Calu3 (cell line): ENCODE measurements at regions of chr11 and their contacts with region 1.

Region 1: GRCh38 chr11:123246749-123247495 is 51.9 kb upstream of the CLMP start:
- DNase-seq: peak; percentile 81
- H3K4me3 Mint-ChIP-seq: no peak overlapping the region
- H3K27ac Mint-ChIP-seq: no peak overlapping the region
- H3K4me1 Mint-ChIP-seq: no peaks in the 10 kb centered on the region
- H3K27me3 Mint-ChIP-seq: peaks cover 46% of the 10 kb centered on the region
- CTCF ChIP-seq: peak; percentile 86

Region 2: GRCh38 chr11:122933416-122933815 is 313.5 kb before region 1 on chr11:
- CTCF ChIA-PET with region 1: no interaction called
- intact Hi-C with region 1: no loop called
- DNase-seq: no peak
- H3K4me3 Mint-ChIP-seq: no peak overlapping the region
- H3K27ac Mint-ChIP-seq: no peak overlapping the region
- H3K4me1 Mint-ChIP-seq: no peaks in the 10 kb centered on the region
- H3K27me3 Mint-ChIP-seq: no peaks in the 10 kb centered on the region
- CTCF ChIP-seq: no peak

Region 3: GRCh38 chr11:123103326-123103980 is 143.5 kb before region 1 on chr11:
- CTCF ChIA-PET with region 1: interaction called, 17 read pairs
- intact Hi-C with region 1: no loop called
- DNase-seq: peak; percentile 20
- H3K4me3 Mint-ChIP-seq: no peak overlapping the region
- H3K27ac Mint-ChIP-seq: no peak overlapping the region
- H3K4me1 Mint-ChIP-seq: no peaks in the 10 kb centered on the region
- H3K27me3 Mint-ChIP-seq: peaks cover 19% of the 10 kb centered on the region
- CTCF ChIP-seq: peak; percentile 42

Region 4: DNA sequence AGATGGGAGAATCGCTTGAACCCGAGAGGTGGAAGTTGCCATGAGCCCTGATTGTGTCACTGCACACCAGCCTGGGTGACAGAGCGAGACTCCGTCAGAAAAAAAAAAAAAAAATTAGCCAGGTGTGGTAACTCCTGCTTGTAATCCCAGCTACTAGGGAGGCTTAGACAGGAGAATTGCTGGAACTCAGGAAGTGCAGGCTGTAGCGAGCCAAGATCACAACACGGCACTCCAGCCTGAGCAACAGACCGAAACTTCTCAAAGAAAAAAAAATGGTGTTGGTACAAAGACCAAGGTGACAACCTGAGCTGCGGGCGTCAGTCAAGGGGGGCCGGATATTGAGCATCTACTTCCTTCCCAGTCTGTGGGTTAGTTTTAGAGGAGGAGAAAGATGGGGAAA is 136.6 kb before region 1 on chr11:
- CTCF ChIA-PET with region 1: interaction called, 17 read pairs
- intact Hi-C with region 1: loop called (anchors 1 kb)
- DNase-seq: no peak
- H3K4me3 Mint-ChIP-seq: no peak overlapping the region
- H3K27ac Mint-ChIP-seq: no peak overlapping the region
- H3K4me1 Mint-ChIP-seq: no peaks in the 10 kb centered on the region
- H3K27me3 Mint-ChIP-seq: no peaks in the 10 kb centered on the region
- CTCF ChIP-seq: no peak

Region 5: DNA sequence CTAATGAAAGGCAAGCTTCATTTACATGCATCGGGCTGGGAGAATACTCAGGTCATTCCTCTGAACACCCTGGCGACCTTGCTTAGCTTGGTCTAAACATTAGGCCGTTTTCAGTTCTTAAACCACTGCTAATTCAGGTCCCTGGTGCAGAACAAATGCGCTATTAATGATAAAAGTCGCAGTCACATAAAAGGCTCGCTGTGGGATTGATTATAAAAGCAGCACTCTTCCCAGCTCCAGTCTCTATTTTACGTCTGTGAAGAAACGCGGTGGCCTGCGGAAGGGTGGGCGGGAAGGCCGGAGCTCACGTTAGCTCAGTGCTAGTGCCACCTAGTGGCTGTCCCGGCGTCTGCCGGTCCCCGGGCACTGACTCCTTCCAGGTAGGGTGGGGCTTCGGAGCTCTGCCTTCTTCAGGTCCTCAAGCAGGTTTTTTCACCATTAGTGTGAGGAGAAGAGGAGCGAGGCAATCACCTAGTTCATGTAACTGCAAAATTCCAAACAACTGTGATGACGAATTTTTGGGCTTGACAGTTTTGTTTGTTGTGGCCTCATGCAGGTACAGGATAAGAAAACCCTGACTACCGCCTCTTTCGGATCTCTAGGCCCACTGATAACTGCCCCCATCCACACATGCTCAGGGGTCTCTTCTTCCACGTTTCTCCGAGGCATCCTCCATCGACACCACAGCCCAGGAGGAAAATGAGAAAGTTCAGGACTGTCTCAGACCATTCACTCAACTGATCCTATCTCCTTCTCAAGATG is 14.6 kb after region 1 on chr11:
- CTCF ChIA-PET with region 1: interaction called, 11 read pairs
- intact Hi-C with region 1: no loop called
- DNase-seq: peak; percentile 82
- H3K4me3 Mint-ChIP-seq: peak overlapping the region; percentile 48
- H3K27ac Mint-ChIP-seq: no peak overlapping the region
- H3K4me1 Mint-ChIP-seq: no peaks in the 10 kb centered on the region
- H3K27me3 Mint-ChIP-seq: peaks cover 40% of the 10 kb centered on the region
- CTCF ChIP-seq: peak; percentile 51

Region 6: DNA sequence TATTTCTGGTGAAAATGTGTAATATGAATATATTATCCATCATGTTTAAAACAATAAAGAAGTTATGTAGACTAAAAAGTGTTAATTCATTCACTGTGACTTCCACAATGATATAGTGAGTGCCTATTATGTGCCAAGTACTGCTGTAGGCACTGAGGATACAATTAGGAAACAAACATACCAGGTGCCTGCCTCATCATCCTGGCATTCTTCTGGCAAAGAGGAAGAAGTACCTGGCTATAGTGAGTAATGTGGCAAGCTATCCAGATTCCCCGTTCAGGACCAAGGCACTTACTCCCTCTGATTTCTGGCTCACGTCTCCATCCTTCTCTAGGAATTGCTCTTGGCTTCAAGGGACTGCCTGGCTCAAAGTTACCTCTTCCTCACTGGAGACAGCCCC is 25.6 kb after region 1 on chr11:
- CTCF ChIA-PET with region 1: no interaction called
- intact Hi-C with region 1: no loop called
- DNase-seq: no peak
- H3K4me3 Mint-ChIP-seq: no peak overlapping the region
- H3K27ac Mint-ChIP-seq: no peak overlapping the region
- H3K4me1 Mint-ChIP-seq: no peaks in the 10 kb centered on the region
- H3K27me3 Mint-ChIP-seq: peaks cover 17% of the 10 kb centered on the region
- CTCF ChIP-seq: no peak